ENCODE measurements at regions of chr1 and their contacts with region 1.

Region 1: GRCh38 chr1:207963427-207964194 is 52.7 kb upstream of the CD34 start:
- DNase-seq: peak; percentile 85 to 89 (median 85)
- H3K4me3 ChIP-seq: peak overlapping the region; percentile 63 to 89 (median 76)
- H3K4me3 Mint-ChIP-seq: peak overlapping the region; percentile 95 to 98
- H3K27ac ChIP-seq: peak overlapping the region; percentile 58 to 85
- H3K27ac Mint-ChIP-seq: peak overlapping the region; percentile 33 to 93 (median 85)
- H3K4me1 ChIP-seq: peaks cover 21 to 28% of the 10 kb centered on the region in 2 donors
- H3K4me1 Mint-ChIP-seq: peaks cover 22% of the 10 kb centered on the region
- H3K27me3 ChIP-seq: peaks cover 15 to 16% of the 10 kb centered on the region in 2 donors
- H3K27me3 Mint-ChIP-seq: peaks cover 19 to 23% (median 22%) of the 10 kb centered on the region in 3 donors
- CTCF ChIP-seq: peak; percentile 99

Region 2: GRCh38 chr1:207654320-207654719 is 309.3 kb before region 1 on chr1:
- intact Hi-C with region 1: no loop called
- DNase-seq: no peak
- H3K4me3 ChIP-seq: no peak overlapping the region
- H3K4me3 Mint-ChIP-seq: no peak overlapping the region
- H3K27ac ChIP-seq: no peak overlapping the region
- H3K27ac Mint-ChIP-seq: no peak overlapping the region
- H3K4me1 ChIP-seq: no peaks in the 10 kb centered on the region
- H3K4me1 Mint-ChIP-seq: no peaks in the 10 kb centered on the region
- H3K27me3 ChIP-seq: no peaks in the 10 kb centered on the region
- H3K27me3 Mint-ChIP-seq: peaks cover 0 to 8% (median 1%) of the 10 kb centered on the region in 3 donors
- CTCF ChIP-seq: peak; percentile 24

Region 3: DNA sequence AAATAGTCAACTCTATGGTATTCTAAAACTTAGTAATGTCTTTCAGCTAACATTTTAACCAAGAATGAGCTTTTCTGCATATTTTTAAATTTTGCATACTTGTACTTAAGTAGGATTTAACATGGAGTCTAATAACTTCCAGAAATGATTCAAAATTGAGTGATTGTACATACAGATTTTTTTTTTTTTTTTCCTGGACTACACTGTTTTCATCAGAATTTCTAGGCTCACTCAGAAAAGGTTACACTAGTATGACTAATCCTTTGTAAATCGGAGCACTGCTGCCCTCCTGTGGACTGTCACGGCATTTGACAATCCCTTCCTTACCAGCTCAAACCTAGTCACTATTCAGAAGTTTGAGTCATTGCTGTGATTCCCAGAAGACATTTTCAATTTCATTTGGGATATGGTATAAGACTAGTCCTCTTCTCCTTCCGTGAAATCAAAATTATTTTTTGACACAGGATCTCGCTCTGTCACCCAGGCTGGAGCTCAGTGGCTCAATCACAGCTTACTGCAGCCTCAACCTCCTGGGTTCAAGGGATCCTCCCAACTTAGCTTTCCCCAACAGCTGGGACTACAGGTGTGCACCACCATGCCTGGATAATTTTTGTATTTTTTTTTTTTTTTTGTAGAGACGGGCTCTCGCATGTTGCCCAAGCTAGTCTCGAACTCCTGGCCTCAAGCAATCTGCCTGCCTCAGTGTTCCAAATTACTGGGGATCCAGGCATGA is 166.2 kb before region 1 on chr1:
- intact Hi-C with region 1: loop called in 1 of 2 experiments (anchors 10 kb)
- DNase-seq: peak; percentile 70 to 87 (median 87)
- H3K4me3 ChIP-seq: no peak overlapping the region
- H3K4me3 Mint-ChIP-seq: no peak overlapping the region
- H3K27ac ChIP-seq: no peak overlapping the region
- H3K27ac Mint-ChIP-seq: peak overlapping the region in 2 of 7 donors; percentile 19 to 63
- H3K4me1 ChIP-seq: peaks cover 10 to 16% of the 10 kb centered on the region in 2 donors
- H3K4me1 Mint-ChIP-seq: peaks cover 18% of the 10 kb centered on the region
- H3K27me3 ChIP-seq: no peaks in the 10 kb centered on the region
- H3K27me3 Mint-ChIP-seq: peaks cover 0 to 6% (median 0%) of the 10 kb centered on the region in 3 donors
- CTCF ChIP-seq: peak; percentile 85

Region 4: GRCh38 chr1:207828485-207829158 is 135.0 kb before region 1 on chr1:
- intact Hi-C with region 1: loop called (anchors 5 to 10 kb)
- DNase-seq: peak; percentile 92 to 97 (median 96)
- H3K4me3 ChIP-seq: peak overlapping the region in 1 of 3 experiments; percentile 73
- H3K4me3 Mint-ChIP-seq: peak overlapping the region; percentile 43 to 74
- H3K27ac ChIP-seq: peak overlapping the region; percentile 42 to 98
- H3K27ac Mint-ChIP-seq: peak overlapping the region; percentile 96 to 99 (median 99)
- H3K4me1 ChIP-seq: peaks cover 76 to 88% of the 10 kb centered on the region in 2 donors
- H3K4me1 Mint-ChIP-seq: peaks cover 85% of the 10 kb centered on the region
- H3K27me3 ChIP-seq: no peaks in the 10 kb centered on the region
- H3K27me3 Mint-ChIP-seq: peaks cover 0 to 5% (median 4%) of the 10 kb centered on the region in 3 donors
- CTCF ChIP-seq: peak; percentile 95

Region 5: DNA sequence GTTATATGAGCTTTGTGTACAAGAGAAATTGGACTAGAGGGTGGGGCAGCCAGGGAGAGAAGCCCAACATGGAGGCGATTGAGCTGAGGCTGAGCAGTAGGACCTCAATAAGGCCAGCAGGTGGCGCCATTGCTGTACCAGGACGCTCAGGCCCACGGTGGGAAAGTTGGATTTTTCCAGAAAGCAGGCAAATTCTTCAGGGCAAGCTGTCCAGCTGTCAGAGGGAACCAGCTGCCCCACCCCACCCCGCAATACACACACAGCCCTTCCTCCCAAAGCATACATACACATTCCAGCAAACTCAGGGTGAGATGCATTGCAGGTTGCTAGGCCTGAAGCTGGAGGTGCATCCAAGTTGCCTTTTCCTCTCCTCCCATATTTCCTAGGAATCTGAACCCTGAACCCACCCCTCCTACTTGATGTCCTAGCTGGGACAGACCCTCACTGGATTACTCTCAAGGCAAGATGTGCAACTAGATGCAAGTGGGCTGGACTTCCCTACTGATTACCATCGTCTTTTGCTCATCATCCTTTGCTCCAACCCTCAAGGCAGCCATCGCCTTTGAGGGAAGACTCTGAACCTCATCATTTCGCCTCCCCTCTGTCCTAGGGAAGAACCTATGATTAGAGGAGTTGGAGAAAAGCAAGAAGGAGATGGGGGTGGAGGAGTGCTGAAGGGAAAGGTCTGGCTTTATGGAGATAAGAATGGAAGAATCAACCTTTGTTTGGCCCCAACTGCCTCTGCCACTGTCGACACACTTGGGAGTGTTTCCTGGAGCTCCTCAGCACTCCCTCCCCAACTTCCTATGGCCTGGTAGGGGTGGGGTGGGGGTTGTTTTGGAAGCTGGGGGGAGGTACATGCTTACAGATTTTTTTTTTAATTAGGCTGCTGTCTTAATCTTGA is 78.2 kb before region 1 on chr1:
- intact Hi-C with region 1: loop called (anchors 2 to 5 kb)
- DNase-seq: peak; percentile 64 to 80 (median 79)
- H3K4me3 ChIP-seq: no peak overlapping the region
- H3K4me3 Mint-ChIP-seq: peak overlapping the region in 1 of 2 donors; percentile 13
- H3K27ac ChIP-seq: no peak overlapping the region
- H3K27ac Mint-ChIP-seq: peak overlapping the region in 1 of 7 donors; percentile 3
- H3K4me1 ChIP-seq: peaks cover 29 to 42% of the 10 kb centered on the region in 2 donors
- H3K4me1 Mint-ChIP-seq: peaks cover 53% of the 10 kb centered on the region
- H3K27me3 ChIP-seq: no peaks in the 10 kb centered on the region
- H3K27me3 Mint-ChIP-seq: peaks cover 0 to 9% (median 2%) of the 10 kb centered on the region in 3 donors
- CTCF ChIP-seq: peak; percentile 99

Region 6: DNA sequence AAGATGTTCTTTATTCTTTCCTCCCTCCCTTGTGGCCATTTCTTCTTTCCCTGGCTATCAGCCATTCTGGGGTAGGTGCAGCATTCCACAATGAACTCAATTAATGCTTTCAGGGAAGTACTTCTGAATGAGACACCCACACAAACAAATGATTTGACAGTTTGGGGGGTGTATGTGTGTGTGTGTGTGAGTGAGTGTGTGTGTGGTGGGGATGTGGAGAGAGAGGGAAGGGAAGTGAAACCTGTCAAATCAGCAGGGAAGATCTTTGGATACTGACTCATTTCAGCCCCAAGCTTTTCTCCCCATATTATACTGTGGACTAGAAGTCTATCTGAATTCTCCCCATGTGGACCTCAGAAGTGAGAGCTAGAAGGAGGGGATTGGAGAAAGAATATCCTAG is 102.3 kb after region 1 on chr1:
- intact Hi-C with region 1: no loop called
- DNase-seq: peak; percentile 52 to 80 (median 75)
- H3K4me3 ChIP-seq: no peak overlapping the region
- H3K4me3 Mint-ChIP-seq: peak overlapping the region in 1 of 2 donors; percentile 3
- H3K27ac ChIP-seq: peak overlapping the region in 1 of 2 donors; percentile 27
- H3K27ac Mint-ChIP-seq: peak overlapping the region in 6 of 7 donors; percentile 13 to 37 (median 32)
- H3K4me1 ChIP-seq: peaks cover 11 to 13% of the 10 kb centered on the region in 2 donors
- H3K4me1 Mint-ChIP-seq: peaks cover 13% of the 10 kb centered on the region
- H3K27me3 ChIP-seq: no peaks in the 10 kb centered on the region
- H3K27me3 Mint-ChIP-seq: peaks cover 0 to 1% (median 0%) of the 10 kb centered on the region in 3 donors
- CTCF ChIP-seq: no peak

Measured in CD14-positive monocyte (primary cell).